ENCODE measurements at regions of chr14 and their contacts with region 1.

Region 1: DNA sequence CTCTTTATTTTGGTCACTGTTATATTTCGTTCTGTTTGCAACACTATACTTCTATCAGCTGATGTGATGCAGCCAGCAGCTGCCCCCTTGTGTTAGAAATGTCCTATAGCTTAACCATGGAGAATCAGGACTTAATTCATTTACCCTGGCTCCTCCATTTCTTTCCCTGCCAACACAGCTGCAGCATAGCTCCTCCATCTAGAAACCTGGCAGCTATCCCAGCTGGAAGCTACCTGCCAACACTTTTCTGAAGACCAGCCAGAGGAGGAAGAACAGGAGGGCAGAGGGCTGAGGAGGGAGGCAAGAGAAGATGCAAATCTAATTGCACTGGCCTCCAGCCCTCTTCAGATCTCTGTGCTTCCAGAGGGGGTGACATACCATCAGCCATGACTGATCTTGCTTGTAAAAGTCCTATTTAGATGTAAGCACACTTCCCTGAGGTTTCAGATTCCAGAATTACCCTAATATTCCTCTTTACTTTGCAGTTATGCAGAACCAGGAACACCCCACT is 156.8 kb upstream of the TMEM260 start:
- DNase-seq: peak; percentile 79
- ATAC-seq: peak; percentile 92
- H3K4me3 ChIP-seq: no peak overlapping the region
- H3K27ac ChIP-seq: no peak overlapping the region
- H3K4me1 ChIP-seq: no peaks in the 10 kb centered on the region
- H3K27me3 ChIP-seq: peaks cover 62% of the 10 kb centered on the region
- CTCF ChIP-seq: peak; percentile 93

Region 2: GRCh38 chr14:55270832-55271565 is 1151.8 kb before region 1 on chr14 and contains the start of gene FBXO34:
- CTCF ChIA-PET with region 1: no interaction called
- POLR2A ChIA-PET with region 1: no interaction called
- intact Hi-C with region 1: no loop called
- DNase-seq: peak; percentile 100
- ATAC-seq: peak; percentile 89
- H3K4me3 ChIP-seq: peak within 1 kb of the TSS; percentile 94
- H3K27ac ChIP-seq: peak within 1 kb of the TSS; percentile 15
- H3K4me1 ChIP-seq: peaks cover 33% of the 10 kb centered on the region
- H3K27me3 ChIP-seq: no peaks in the 10 kb centered on the region
- CTCF ChIP-seq: peak; percentile 100
- total RNA-seq, gene FBXO34: 33.6 and 35.9 TPM in 2 replicates

Region 3: GRCh38 chr14:55438066-55438683 is 984.6 kb before region 1 on chr14:
- CTCF ChIA-PET with region 1: interaction called, 3 read pairs
- POLR2A ChIA-PET with region 1: no interaction called
- intact Hi-C with region 1: loop called (anchors 1 kb)
- DNase-seq: peak; percentile 92
- ATAC-seq: peak; percentile 73
- H3K4me3 ChIP-seq: no peak overlapping the region
- H3K27ac ChIP-seq: no peak overlapping the region
- H3K4me1 ChIP-seq: peaks cover 21% of the 10 kb centered on the region
- H3K27me3 ChIP-seq: no peaks in the 10 kb centered on the region
- CTCF ChIP-seq: peak; percentile 99

Region 4: GRCh38 chr14:56247468-56248200 is 175.1 kb before region 1 on chr14:
- CTCF ChIA-PET with region 1: no interaction called
- POLR2A ChIA-PET with region 1: no interaction called
- intact Hi-C with region 1: loop called (anchors 2 kb)
- DNase-seq: peak; percentile 74
- ATAC-seq: peak; percentile 46; the same call in 1 of the 2 replicates
- H3K4me3 ChIP-seq: no peak overlapping the region
- H3K27ac ChIP-seq: no peak overlapping the region
- H3K4me1 ChIP-seq: peaks cover 11% of the 10 kb centered on the region
- H3K27me3 ChIP-seq: peaks cover 40% of the 10 kb centered on the region
- CTCF ChIP-seq: peak; percentile 94

Measured in PC-3 (cell line).